ENCODE measurements at regions of chr6 and their contacts with region 1.

Region 1: DNA sequence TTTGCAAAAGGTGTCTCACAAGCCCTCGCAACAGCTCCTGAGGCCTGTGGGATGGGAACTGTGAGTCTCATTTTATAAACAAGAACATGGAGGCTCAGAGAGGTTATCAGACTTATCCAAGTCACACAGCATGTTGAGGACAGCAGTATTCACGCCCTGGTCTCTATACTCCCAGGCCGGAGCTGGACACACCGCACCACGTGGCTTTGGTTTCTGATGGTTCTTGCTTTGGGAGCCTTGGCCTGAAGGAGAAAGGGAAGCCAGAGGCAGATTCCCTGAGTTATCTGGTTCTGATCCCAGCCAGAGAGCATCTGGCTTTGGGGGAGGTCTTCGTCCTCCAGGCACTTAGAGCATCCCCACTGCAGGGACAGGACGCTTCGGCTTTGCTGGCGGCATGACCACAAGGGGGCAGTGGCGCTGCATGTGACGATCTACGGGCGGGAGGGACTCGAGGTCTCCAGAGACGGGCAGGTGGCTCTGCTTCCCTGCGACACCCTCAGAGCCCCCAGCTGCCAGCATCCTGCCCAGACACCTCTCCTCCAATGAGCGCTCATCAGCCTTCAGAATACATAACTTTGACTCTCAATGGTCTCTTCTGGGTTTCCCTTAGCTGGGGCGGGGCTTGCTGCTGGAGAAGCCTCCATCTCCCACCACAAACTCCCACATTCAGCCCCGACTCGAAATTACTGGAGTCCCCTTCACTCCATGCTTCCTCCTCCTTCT is 51.4 kb upstream of the SAYSD1 start:
- DNase-seq: peak; percentile 60 to 86 (median 68)
- H3K4me3 ChIP-seq: no peak overlapping the region
- H3K4me3 Mint-ChIP-seq: no peak overlapping the region
- H3K27ac ChIP-seq: no peak overlapping the region
- H3K27ac Mint-ChIP-seq: peak overlapping the region in 1 of 8 donors; percentile 66
- H3K4me1 ChIP-seq: peaks cover 4% of the 10 kb centered on the region
- H3K4me1 Mint-ChIP-seq: peaks cover 2 to 6% (median 6%) of the 10 kb centered on the region in 3 donors
- H3K27me3 ChIP-seq: no peaks in the 10 kb centered on the region
- H3K27me3 Mint-ChIP-seq: peaks cover 0 to 3% of the 10 kb centered on the region in 2 donors

Region 2: GRCh38 chr6:39075010-39075686 is 91.2 kb before region 1 on chr6:
- CTCF ChIA-PET with region 1: no interaction called
- POLR2A ChIA-PET with region 1: no interaction called
- DNase-seq: no peak
- H3K4me3 ChIP-seq: no peak overlapping the region
- H3K4me3 Mint-ChIP-seq: no peak overlapping the region
- H3K27ac ChIP-seq: no peak overlapping the region
- H3K27ac Mint-ChIP-seq: peak overlapping the region in 1 of 8 donors; percentile 35
- H3K4me1 ChIP-seq: no peaks in the 10 kb centered on the region
- H3K4me1 Mint-ChIP-seq: no peaks in the 10 kb centered on the region
- H3K27me3 ChIP-seq: no peaks in the 10 kb centered on the region
- H3K27me3 Mint-ChIP-seq: peaks cover 1 to 13% of the 10 kb centered on the region in 2 donors

Region 3: DNA sequence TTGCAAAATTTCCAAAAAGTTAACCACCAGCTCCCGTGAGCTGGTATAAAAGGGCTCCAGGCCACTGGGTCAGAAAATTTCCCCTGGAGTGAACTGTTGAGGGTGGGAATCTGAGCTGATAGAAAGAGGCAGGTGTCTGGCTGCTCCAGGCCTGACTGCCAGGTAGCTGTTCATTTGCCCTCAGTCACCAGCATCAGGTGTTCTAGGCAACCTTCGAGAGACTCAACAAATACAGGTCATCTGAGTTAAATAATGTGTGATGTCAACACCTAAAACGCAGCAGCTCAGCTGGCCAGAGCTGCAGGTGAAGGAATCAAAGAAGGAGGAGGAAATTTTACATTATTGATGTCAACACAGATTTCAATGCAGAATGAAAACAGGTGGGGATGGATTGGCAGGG is 16.3 kb after region 1 on chr6:
- CTCF ChIA-PET with region 1: interaction called, 11 read pairs
- POLR2A ChIA-PET with region 1: no interaction called
- DNase-seq: no peak
- H3K4me3 ChIP-seq: no peak overlapping the region
- H3K4me3 Mint-ChIP-seq: no peak overlapping the region
- H3K27ac ChIP-seq: no peak overlapping the region
- H3K27ac Mint-ChIP-seq: no peak overlapping the region
- H3K4me1 ChIP-seq: no peaks in the 10 kb centered on the region
- H3K4me1 Mint-ChIP-seq: no peaks in the 10 kb centered on the region
- H3K27me3 ChIP-seq: no peaks in the 10 kb centered on the region
- H3K27me3 Mint-ChIP-seq: no peaks in the 10 kb centered on the region